Gastrocnemius medialis (tissue), 4 donors: ENCODE measurements at regions of chr18 and their contacts with region 1.

Region 1: GRCh38 chr18:63367053-63367953 is at the start of gene KDSR:
- DNase-seq: peak; percentile 85 to 90
- ATAC-seq: peak; percentile 88 to 89
- H3K4me3 ChIP-seq: peak within 1 kb of the TSS; percentile 81 to 95 (median 90)
- H3K27ac ChIP-seq: peak within 1 kb of the TSS; percentile 90 to 99 (median 97)
- H3K4me1 ChIP-seq: peaks cover 19 to 21% of the 10 kb centered on the region in 2 donors
- H3K27me3 ChIP-seq: no peaks in the 10 kb centered on the region
- CTCF ChIP-seq: peak in 2 of 5 experiments; percentile 12 to 26
- POLR2A ChIP-seq: peak; percentile 80 to 87
- total RNA-seq, gene KDSR: 11.2 to 18.6 (median 14.4) TPM

Region 2: GRCh38 chr18:62425465-62426195 is 941.7 kb before region 1 on chr18:
- in situ Hi-C with region 1: no loop called
- intact Hi-C with region 1: loop called (anchors 1 kb)
- DNase-seq: peak; percentile 86 to 92
- ATAC-seq: peak; percentile 81 to 82
- H3K4me3 ChIP-seq: peak overlapping the region; percentile 31 to 48 (median 40)
- H3K27ac ChIP-seq: peak overlapping the region; percentile 85 to 97 (median 96)
- H3K4me1 ChIP-seq: peaks cover 23 to 25% of the 10 kb centered on the region in 2 donors
- H3K27me3 ChIP-seq: no peaks in the 10 kb centered on the region
- CTCF ChIP-seq: peak; percentile 88 to 93 (median 90)
- POLR2A ChIP-seq: peak; percentile 45 to 73

Region 3: DNA sequence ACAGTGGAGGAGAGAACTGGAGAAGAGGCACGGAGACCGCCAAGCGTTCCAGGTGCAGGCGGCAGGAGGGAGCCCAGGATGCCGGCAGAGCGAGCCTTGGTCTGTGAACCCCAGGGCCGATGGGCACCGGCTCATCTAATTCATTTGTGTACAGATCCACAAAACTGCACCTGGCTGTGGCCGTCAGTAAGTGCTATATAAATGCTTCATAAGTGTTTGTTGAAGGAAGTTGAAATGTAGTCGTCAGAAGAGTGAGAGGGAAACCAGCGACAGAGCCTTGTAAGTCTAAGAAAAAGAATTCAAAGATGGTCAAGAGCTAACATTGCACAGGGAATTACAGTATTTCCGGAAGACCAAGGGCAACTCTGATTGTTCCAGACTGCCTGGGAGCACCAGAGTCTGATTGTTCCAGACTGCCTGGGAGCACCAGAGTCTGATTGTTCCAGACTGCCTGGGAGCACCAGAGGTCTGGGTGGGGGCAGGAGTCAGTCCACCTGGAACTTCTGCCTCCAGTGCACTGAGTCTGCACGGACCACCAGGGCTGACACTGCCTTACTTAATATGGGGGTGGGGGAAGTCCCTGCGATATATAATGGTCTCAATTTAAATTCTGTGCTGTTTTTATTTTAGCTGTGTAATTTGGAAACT is 160.0 kb before region 1 on chr18:
- in situ Hi-C with region 1: no loop called
- intact Hi-C with region 1: no loop called
- DNase-seq: no peak
- ATAC-seq: no peak
- H3K4me3 ChIP-seq: no peak overlapping the region
- H3K27ac ChIP-seq: no peak overlapping the region
- H3K4me1 ChIP-seq: peaks cover 7 to 9% of the 10 kb centered on the region in 2 donors
- H3K27me3 ChIP-seq: no peaks in the 10 kb centered on the region
- CTCF ChIP-seq: no peak
- POLR2A ChIP-seq: no peak

Region 4: DNA sequence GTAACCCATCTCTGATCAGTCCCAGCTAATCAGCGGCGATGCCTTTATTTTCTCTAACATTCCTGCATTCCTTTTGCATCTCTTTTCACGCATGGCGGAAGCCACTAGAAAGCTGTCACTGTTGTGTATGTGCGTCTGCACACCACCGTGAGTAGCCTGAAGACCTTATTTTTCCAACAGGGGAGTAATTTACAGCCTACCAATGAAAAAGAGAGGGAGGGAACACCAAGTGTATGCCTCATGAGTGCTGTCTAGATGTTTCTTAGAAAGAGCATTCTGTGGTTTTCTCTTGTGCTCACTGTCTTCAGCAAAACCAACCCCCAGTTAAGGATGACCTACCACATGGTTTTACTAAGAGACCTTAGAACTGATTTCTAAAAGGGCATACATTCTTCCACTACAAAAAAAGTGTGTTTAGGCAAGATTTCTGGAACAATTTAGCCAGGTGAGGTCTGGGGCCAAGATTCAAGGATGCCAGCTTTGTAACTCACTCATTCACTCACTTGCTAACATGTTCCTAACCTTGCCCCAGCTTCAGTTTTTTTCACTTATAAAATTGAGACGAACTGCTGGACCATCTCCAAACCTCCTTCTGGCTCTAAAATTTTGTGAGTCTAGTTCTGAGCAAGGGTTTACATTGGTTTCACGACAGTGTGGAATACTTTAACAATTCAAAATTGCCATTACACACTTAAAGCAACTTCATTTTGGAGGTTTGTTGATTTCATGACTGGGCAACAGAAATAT is 99.2 kb before region 1 on chr18:
- in situ Hi-C with region 1: no loop called
- intact Hi-C with region 1: loop called (anchors 2 kb)
- DNase-seq: no peak
- ATAC-seq: no peak
- H3K4me3 ChIP-seq: no peak overlapping the region
- H3K27ac ChIP-seq: no peak overlapping the region
- H3K4me1 ChIP-seq: peaks cover 44 to 52% of the 10 kb centered on the region in 2 donors
- H3K27me3 ChIP-seq: no peaks in the 10 kb centered on the region
- CTCF ChIP-seq: no peak
- POLR2A ChIP-seq: no peak

Region 5: DNA sequence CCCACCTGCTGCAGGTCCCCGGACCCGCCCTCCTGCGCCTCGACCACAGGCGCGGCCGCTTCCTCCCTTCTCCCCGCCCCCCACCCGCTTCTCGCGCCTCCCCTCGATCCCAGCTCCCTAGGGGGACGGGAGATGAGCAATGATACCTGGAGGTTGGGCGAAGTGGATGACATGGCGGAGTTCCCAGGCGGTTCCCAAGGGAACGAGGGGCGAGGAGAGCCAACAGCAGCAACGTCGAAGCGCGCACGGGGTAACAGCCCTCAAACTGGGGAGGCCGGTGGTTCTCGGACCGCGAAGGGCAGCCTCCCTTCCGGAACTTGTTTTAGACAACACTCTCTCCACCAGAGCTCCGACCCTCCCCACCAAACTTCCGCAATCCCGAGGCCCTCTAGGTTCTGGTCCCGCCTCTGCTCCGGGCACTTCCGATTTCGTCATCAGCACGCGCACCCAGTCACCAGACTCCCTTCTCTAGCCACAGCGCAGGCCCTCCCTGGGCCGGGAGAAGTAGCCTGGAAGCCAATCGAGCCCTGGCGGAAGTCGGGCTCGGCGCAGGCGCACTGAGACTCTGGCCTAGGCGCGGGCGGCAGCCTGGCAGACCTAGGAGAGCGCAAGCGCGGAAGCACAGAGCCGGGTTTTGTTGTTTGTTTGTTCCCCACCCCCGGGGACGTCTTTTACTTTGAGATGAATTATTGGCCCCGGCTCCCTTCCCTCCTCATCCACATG is 54.9 kb after region 1 on chr18 and contains the start of gene VPS4B:
- in situ Hi-C with region 1: loop called in 2 of 4 experiments (anchors 5 to 10 kb)
- intact Hi-C with region 1: loop called (anchors 1 kb)
- DNase-seq: peak; percentile 98 to 99
- ATAC-seq: peak; percentile 99
- H3K4me3 ChIP-seq: peak within 1 kb of the TSS; percentile 93 to 96 (median 94)
- H3K27ac ChIP-seq: peak within 1 kb of the TSS; percentile 88 to 97 (median 93)
- H3K4me1 ChIP-seq: peaks cover 14 to 16% of the 10 kb centered on the region in 2 donors
- H3K27me3 ChIP-seq: no peaks in the 10 kb centered on the region
- CTCF ChIP-seq: peak in 1 of 5 experiments; percentile 20
- POLR2A ChIP-seq: peak; percentile 81 to 84
- total RNA-seq, gene VPS4B: 13.4 to 18.2 (median 16.0) TPM

Region 6: DNA sequence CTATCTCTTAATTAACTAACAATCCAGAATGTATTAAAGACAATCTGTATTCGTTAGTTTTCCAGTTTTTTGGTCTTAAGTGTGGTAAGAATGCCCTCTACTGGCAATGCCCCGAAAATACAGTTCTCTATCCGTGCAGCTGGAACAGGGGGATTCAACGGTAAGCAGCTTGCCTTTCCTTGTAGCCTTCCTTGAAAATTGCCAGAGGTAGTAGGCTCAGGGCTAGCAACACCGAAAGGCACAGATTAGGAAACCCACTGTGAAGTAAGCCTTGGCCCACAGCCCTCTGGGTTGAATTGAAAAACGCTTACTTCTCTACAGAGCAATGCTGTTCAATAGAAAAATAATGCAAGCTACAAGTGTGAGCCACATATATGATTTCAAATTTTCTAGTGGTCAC is 72.0 kb after region 1 on chr18:
- in situ Hi-C with region 1: loop called in 1 of 4 experiments (anchors 5 kb)
- intact Hi-C with region 1: no loop called
- DNase-seq: peak; percentile 10 to 33
- ATAC-seq: peak; percentile 68 to 80
- H3K4me3 ChIP-seq: no peak overlapping the region
- H3K27ac ChIP-seq: no peak overlapping the region
- H3K4me1 ChIP-seq: peaks cover 3 to 5% of the 10 kb centered on the region in 2 donors
- H3K27me3 ChIP-seq: no peaks in the 10 kb centered on the region
- CTCF ChIP-seq: peak; percentile 64 to 77 (median 67)
- POLR2A ChIP-seq: no peak

Region 7: GRCh38 chr18:63511286-63511685 is 144.0 kb after region 1 on chr18:
- in situ Hi-C with region 1: no loop called
- intact Hi-C with region 1: no loop called
- DNase-seq: no peak
- ATAC-seq: no peak
- H3K4me3 ChIP-seq: no peak overlapping the region
- H3K27ac ChIP-seq: no peak overlapping the region
- H3K4me1 ChIP-seq: no peaks in the 10 kb centered on the region
- H3K27me3 ChIP-seq: no peaks in the 10 kb centered on the region
- CTCF ChIP-seq: peak in 1 of 5 experiments; percentile 24
- POLR2A ChIP-seq: no peak